CD4-positive, alpha-beta memory T cell (primary cell): ENCODE measurements at regions of chr1 and their contacts with region 1.

Region 1: GRCh38 chr1:44730741-44731512 is at the start of gene RNU5D-1:
- DNase-seq: peak; percentile 90 to 94 (median 91)
- H3K4me3 ChIP-seq: peak within 1 kb of the TSS; percentile 31 to 39
- H3K4me3 Mint-ChIP-seq: peak within 1 kb of the TSS; percentile 54 to 93 (median 84)
- H3K27ac ChIP-seq: peak within 1 kb of the TSS; percentile 96
- H3K27ac Mint-ChIP-seq: peak within 1 kb of the TSS; percentile 97 to 100 (median 99)
- H3K4me1 ChIP-seq: peaks cover 22% of the 10 kb centered on the region
- H3K4me1 Mint-ChIP-seq: peaks cover 18 to 38% (median 24%) of the 10 kb centered on the region in 4 donors
- H3K27me3 ChIP-seq: no peaks in the 10 kb centered on the region
- H3K27me3 Mint-ChIP-seq: no peaks in the 10 kb centered on the region
- total RNA-seq, gene RNU5D-1: not detected

Region 2: GRCh38 chr1:44616991-44617702 is 113.8 kb before region 1 on chr1:
- CTCF ChIA-PET with region 1: no interaction called
- POLR2A ChIA-PET with region 1: no interaction called
- intact Hi-C with region 1: no loop called
- DNase-seq: no peak
- H3K4me3 ChIP-seq: no peak overlapping the region
- H3K4me3 Mint-ChIP-seq: no peak overlapping the region
- H3K27ac ChIP-seq: no peak overlapping the region
- H3K27ac Mint-ChIP-seq: peak overlapping the region in 1 of 7 donors; percentile 57
- H3K4me1 ChIP-seq: no peaks in the 10 kb centered on the region
- H3K4me1 Mint-ChIP-seq: no peaks in the 10 kb centered on the region
- H3K27me3 ChIP-seq: no peaks in the 10 kb centered on the region
- H3K27me3 Mint-ChIP-seq: no peaks in the 10 kb centered on the region

Region 3: GRCh38 chr1:44674113-44675000 is 56.6 kb before region 1 on chr1 and contains the starts of genes ARMH1 and TMEM53:
- CTCF ChIA-PET with region 1: interaction called, 3 read pairs
- POLR2A ChIA-PET with region 1: interaction called, 12 read pairs
- intact Hi-C with region 1: loop called (anchors 2 kb)
- DNase-seq: peak; percentile 96 to 98 (median 97)
- H3K4me3 ChIP-seq: peak within 1 kb of the TSS; percentile 62 to 95
- H3K4me3 Mint-ChIP-seq: peak within 1 kb of the TSS; percentile 89 to 95 (median 90)
- H3K27ac ChIP-seq: peak within 1 kb of the TSS; percentile 74
- H3K27ac Mint-ChIP-seq: peak within 1 kb of the TSS; percentile 87 to 94 (median 93)
- H3K4me1 ChIP-seq: peaks cover 25% of the 10 kb centered on the region
- H3K4me1 Mint-ChIP-seq: peaks cover 11 to 31% (median 23%) of the 10 kb centered on the region in 4 donors
- H3K27me3 ChIP-seq: no peaks in the 10 kb centered on the region
- H3K27me3 Mint-ChIP-seq: no peaks in the 10 kb centered on the region
- total RNA-seq, gene ARMH1: 64.0 to 74.5 TPM
- total RNA-seq, gene TMEM53: 1.7 to 2.2 TPM

Region 4: GRCh38 chr1:44747878-44748277 is 17.0 kb after region 1 on chr1:
- CTCF ChIA-PET with region 1: interaction called, 20 read pairs
- POLR2A ChIA-PET with region 1: interaction called, 8 read pairs
- intact Hi-C with region 1: no loop called
- DNase-seq: no peak
- H3K4me3 ChIP-seq: no peak overlapping the region
- H3K4me3 Mint-ChIP-seq: no peak overlapping the region
- H3K27ac ChIP-seq: no peak overlapping the region
- H3K27ac Mint-ChIP-seq: peak overlapping the region in 2 of 7 donors; percentile 26 to 57
- H3K4me1 ChIP-seq: peaks cover 6% of the 10 kb centered on the region
- H3K4me1 Mint-ChIP-seq: peaks cover 0 to 10% (median 4%) of the 10 kb centered on the region in 4 donors
- H3K27me3 ChIP-seq: no peaks in the 10 kb centered on the region
- H3K27me3 Mint-ChIP-seq: no peaks in the 10 kb centered on the region

Region 5: DNA sequence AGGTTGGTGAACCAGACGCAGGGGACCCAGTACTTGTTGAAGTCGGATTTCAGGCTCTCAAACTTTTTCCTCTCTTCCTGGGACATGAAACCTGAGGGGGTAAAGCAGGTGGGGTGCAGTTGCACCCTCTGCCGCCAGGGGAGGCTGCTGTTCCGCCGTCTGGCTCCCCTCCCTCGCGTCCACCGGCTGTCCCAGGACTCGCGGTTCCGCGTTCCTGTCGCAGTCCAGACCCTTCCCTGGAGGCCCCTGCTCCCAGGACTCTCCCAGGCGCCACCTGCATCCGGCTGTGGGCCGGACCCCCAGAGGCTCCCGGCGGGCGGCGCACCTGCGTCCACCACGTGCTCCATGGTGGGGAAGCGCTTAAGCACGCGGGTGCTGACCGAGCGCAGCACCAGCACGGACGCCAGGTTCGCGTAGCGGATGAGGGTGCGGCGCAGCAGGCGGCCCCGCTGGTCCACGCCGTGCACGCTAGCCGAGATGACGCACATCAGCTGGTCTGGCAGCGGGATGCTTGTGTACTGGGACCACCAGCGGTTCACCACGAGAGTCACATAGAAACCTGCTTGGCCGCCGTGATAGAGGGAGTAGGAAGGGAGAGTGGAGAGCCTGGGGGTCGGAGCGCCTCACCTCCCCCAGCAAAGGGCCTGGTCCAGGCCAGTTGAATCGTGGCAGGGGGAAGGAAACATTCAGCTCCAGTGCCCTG is 55.4 kb after region 1 on chr1:
- CTCF ChIA-PET with region 1: interaction called, 75 read pairs
- POLR2A ChIA-PET with region 1: interaction called, 31 read pairs
- intact Hi-C with region 1: loop called (anchors 2 kb)
- DNase-seq: peak; percentile 72 to 84 (median 80)
- H3K4me3 ChIP-seq: peak overlapping the region; percentile 52 to 68
- H3K4me3 Mint-ChIP-seq: peak overlapping the region; percentile 73 to 83 (median 80)
- H3K27ac ChIP-seq: peak overlapping the region; percentile 53
- H3K27ac Mint-ChIP-seq: peak overlapping the region; percentile 41 to 95 (median 88)
- H3K4me1 ChIP-seq: peaks cover 39% of the 10 kb centered on the region
- H3K4me1 Mint-ChIP-seq: peaks cover 22 to 37% (median 28%) of the 10 kb centered on the region in 4 donors
- H3K27me3 ChIP-seq: no peaks in the 10 kb centered on the region
- H3K27me3 Mint-ChIP-seq: no peaks in the 10 kb centered on the region

Region 6: DNA sequence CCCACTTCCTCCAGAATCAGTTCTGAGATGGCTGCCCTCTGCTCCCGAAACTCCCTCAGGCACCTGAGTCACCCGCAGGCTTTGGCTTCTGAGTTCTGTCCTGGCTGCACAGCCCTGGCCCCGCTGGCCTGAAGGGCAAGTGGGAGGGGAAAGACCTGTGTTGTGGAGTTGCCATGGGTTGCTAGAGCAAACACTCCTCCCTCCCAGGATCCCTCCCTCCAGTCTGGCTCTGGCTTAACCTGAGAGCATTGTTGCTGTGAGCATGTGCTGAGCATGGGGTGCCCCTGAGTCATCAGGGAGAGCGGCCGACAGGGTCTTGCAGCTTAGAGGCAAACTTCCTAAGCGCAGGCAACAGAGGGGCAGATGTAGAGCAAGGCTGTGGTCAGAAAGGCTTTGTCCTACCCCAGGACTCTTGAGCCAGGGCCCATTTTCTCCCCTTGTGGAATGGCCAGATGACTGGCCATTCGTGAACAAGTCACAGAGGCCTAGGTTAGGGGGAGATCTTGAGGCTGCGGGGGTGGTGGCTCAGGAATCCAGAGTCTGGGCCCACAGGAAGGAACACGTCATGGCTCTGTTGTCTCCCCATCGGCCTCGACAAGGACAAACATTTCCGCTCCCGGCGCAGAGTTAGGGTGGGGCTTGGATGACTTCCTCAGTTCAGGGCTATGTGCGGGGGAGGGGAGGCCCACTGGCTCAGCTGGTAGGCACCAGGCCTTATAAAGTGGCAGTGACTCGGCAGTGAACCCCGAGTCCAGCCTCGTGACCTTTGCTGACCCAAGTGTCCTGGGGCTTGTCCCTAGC is 76.5 kb after region 1 on chr1 and contains the start of gene DYNLT4:
- CTCF ChIA-PET with region 1: interaction called, 22 read pairs
- POLR2A ChIA-PET with region 1: interaction called, 52 read pairs
- intact Hi-C with region 1: loop called (anchors 5 kb)
- DNase-seq: peak; percentile 91 to 98 (median 91)
- H3K4me3 ChIP-seq: peak within 1 kb of the TSS; percentile 41 to 57
- H3K4me3 Mint-ChIP-seq: peak within 1 kb of the TSS; percentile 74 to 87 (median 80)
- H3K27ac ChIP-seq: peak within 1 kb of the TSS; percentile 98
- H3K27ac Mint-ChIP-seq: peak within 1 kb of the TSS; percentile 98 to 100 (median 99)
- H3K4me1 ChIP-seq: peaks cover 91% of the 10 kb centered on the region
- H3K4me1 Mint-ChIP-seq: peaks cover 57 to 94% (median 73%) of the 10 kb centered on the region in 4 donors
- H3K27me3 ChIP-seq: no peaks in the 10 kb centered on the region
- H3K27me3 Mint-ChIP-seq: no peaks in the 10 kb centered on the region
- total RNA-seq, gene DYNLT4: 0.47 TPM in 1 of 2 experiments, not detected in the other

Region 7: GRCh38 chr1:44819608-44820327 is 88.8 kb after region 1 on chr1:
- CTCF ChIA-PET with region 1: interaction called, 6 read pairs
- POLR2A ChIA-PET with region 1: interaction called, 103 read pairs
- intact Hi-C with region 1: loop called (anchors 1 kb)
- DNase-seq: peak; percentile 83 to 90 (median 88)
- H3K4me3 ChIP-seq: peak overlapping the region; percentile 74 to 86
- H3K4me3 Mint-ChIP-seq: peak overlapping the region; percentile 91 to 96 (median 95)
- H3K27ac ChIP-seq: peak overlapping the region; percentile 88
- H3K27ac Mint-ChIP-seq: peak overlapping the region; percentile 100
- H3K4me1 ChIP-seq: peaks cover 33% of the 10 kb centered on the region
- H3K4me1 Mint-ChIP-seq: peaks cover 22 to 57% (median 35%) of the 10 kb centered on the region in 4 donors
- H3K27me3 ChIP-seq: no peaks in the 10 kb centered on the region
- H3K27me3 Mint-ChIP-seq: no peaks in the 10 kb centered on the region